ENCODE measurements at regions of chr21 and their contacts with region 1.

Region 1: DNA sequence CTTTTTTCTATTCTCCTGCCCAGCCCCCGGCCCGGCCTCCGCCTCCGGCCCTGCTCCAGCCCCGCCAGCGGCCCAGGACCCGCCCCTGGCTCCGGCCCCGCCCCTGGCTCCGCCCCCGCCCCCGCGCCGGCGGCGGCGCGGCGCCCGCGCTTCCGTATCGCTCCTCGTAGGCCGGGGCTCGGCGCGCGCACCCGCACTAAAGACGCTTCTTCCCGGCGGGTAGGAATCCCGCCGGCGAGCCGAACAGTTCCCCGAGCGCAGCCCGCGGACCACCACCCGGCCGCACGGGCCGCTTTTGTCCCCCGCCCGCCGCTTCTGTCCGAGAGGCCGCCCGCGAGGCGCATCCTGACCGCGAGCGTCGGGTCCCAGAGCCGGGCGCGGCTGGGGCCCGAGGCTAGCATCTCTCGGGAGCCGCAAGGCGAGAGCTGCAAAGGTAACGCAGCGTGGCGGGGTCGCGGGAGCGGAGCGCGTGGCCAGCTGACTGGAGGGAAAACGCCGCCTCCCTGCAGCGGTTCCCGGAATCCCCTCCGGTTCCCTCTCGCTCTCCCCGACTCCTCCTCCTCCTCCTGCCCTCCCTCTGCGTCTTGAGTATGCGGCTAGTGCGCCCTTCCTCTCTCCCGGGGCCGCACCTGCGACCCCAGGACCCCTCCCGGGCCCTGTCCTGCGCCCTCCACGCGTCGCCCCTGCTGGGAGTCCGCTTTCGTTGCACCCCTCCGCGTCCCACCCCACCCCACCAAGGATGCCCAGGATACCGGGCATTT is at the start of gene IFNAR2:
- DNase-seq: peak; percentile 63 to 73 (median 66)
- H3K4me3 ChIP-seq: peak within 1 kb of the TSS; percentile 70 to 87
- H3K4me3 Mint-ChIP-seq: peak within 1 kb of the TSS; percentile 89 to 97 (median 94)
- H3K27ac ChIP-seq: peak within 1 kb of the TSS; percentile 86
- H3K27ac Mint-ChIP-seq: peak within 1 kb of the TSS; percentile 90 to 96 (median 94)
- H3K4me1 ChIP-seq: peaks cover 41% of the 10 kb centered on the region
- H3K4me1 Mint-ChIP-seq: peaks cover 32 to 49% (median 39%) of the 10 kb centered on the region in 4 donors
- H3K27me3 ChIP-seq: no peaks in the 10 kb centered on the region
- H3K27me3 Mint-ChIP-seq: no peaks in the 10 kb centered on the region
- total RNA-seq, gene IFNAR2: 76.5 to 77.7 TPM

Region 2: GRCh38 chr21:33205476-33205875 is 24.5 kb before region 1 on chr21:
- CTCF ChIA-PET with region 1: interaction called, 11 read pairs
- POLR2A ChIA-PET with region 1: interaction called, 10 read pairs
- intact Hi-C with region 1: no loop called
- DNase-seq: peak in 3 of 5 donors; percentile 20 to 35 (median 23)
- H3K4me3 ChIP-seq: no peak overlapping the region
- H3K4me3 Mint-ChIP-seq: peak overlapping the region; percentile 58 to 92 (median 73)
- H3K27ac ChIP-seq: no peak overlapping the region
- H3K27ac Mint-ChIP-seq: peak overlapping the region; percentile 71 to 97 (median 86)
- H3K4me1 ChIP-seq: peaks cover 38% of the 10 kb centered on the region
- H3K4me1 Mint-ChIP-seq: peaks cover 34 to 67% (median 47%) of the 10 kb centered on the region in 4 donors
- H3K27me3 ChIP-seq: no peaks in the 10 kb centered on the region
- H3K27me3 Mint-ChIP-seq: no peaks in the 10 kb centered on the region

Region 3: GRCh38 chr21:33244082-33244778 is 14.3 kb after region 1 on chr21:
- CTCF ChIA-PET with region 1: interaction called, 5 read pairs
- POLR2A ChIA-PET with region 1: interaction called, 19 read pairs
- intact Hi-C with region 1: loop called (anchors 2 kb)
- DNase-seq: no peak
- H3K4me3 ChIP-seq: peak overlapping the region in 1 of 2 donors; percentile 10
- H3K4me3 Mint-ChIP-seq: peak overlapping the region; percentile 31 to 89 (median 78)
- H3K27ac ChIP-seq: peak overlapping the region; percentile 16
- H3K27ac Mint-ChIP-seq: peak overlapping the region; percentile 87 to 96 (median 94)
- H3K4me1 ChIP-seq: peaks cover 94% of the 10 kb centered on the region
- H3K4me1 Mint-ChIP-seq: peaks cover 63 to 90% (median 76%) of the 10 kb centered on the region in 4 donors
- H3K27me3 ChIP-seq: no peaks in the 10 kb centered on the region
- H3K27me3 Mint-ChIP-seq: no peaks in the 10 kb centered on the region

Region 4: GRCh38 chr21:33299181-33299752 is 69.3 kb after region 1 on chr21:
- CTCF ChIA-PET with region 1: interaction called, 3 read pairs
- POLR2A ChIA-PET with region 1: interaction called, 11 read pairs
- intact Hi-C with region 1: no loop called
- DNase-seq: peak; percentile 39 to 58 (median 41)
- H3K4me3 ChIP-seq: peak overlapping the region in 1 of 2 donors; percentile 19
- H3K4me3 Mint-ChIP-seq: peak overlapping the region; percentile 48 to 88 (median 70)
- H3K27ac ChIP-seq: peak overlapping the region; percentile 10
- H3K27ac Mint-ChIP-seq: peak overlapping the region; percentile 69 to 95 (median 84)
- H3K4me1 ChIP-seq: peaks cover 37% of the 10 kb centered on the region
- H3K4me1 Mint-ChIP-seq: peaks cover 33 to 64% (median 44%) of the 10 kb centered on the region in 4 donors
- H3K27me3 ChIP-seq: no peaks in the 10 kb centered on the region
- H3K27me3 Mint-ChIP-seq: no peaks in the 10 kb centered on the region